K562 (cell line): ENCODE measurements at regions of chr1 and their contacts with region 1.

Region 1: DNA sequence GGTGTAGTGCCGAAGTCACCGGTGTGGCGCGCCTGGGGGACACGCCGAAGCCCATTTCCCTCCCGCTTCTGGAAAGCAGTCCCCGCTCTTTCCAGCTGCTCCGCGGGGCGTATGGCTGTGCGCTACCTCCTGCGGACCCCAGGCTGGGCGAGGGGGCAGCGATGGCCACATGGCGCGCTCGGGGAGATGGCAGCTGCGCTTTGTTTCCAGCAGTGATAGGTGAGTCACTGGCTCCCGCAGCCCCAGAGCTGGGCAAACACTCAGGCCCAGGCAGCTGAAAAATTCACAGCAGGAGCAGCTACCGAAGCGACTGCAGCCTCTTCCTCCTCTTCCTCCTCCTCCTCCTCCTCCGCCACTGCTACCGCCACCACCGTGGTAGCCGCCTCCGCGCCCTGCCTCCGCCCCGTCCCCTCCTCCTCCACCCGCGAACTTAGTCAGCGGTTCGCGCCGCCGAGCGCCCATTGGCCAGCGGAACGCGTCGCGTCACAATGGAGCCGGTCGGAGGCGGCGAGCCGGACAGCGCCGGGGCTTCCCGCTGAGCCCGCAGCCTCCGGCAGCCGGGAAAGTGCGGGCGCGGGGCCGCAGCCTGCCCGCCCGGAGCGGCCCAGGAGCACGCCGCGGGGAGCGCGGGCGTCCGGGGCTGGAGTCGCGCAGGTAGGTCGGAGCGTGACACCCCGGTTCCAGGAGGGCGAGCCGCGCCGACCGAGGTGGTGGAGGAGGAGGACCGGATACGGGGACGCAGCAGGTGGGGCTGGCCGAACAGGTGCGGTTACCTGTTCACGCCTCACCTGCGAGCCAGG is at the start of gene LRRC8B:
- DNase-seq: peak; percentile 90 to 94 (median 92)
- ATAC-seq: peak; percentile 94
- H3K4me3 ChIP-seq: peak within 1 kb of the TSS; percentile 94
- H3K27ac ChIP-seq: peak within 1 kb of the TSS; percentile 98
- H3K4me1 ChIP-seq: peaks cover 17 to 32% of the 10 kb centered on the region in 2 experiments
- H3K27me3 ChIP-seq: no peaks in the 10 kb centered on the region
- CTCF ChIP-seq: no peak
- EP300 ChIP-seq: no peak
- POLR2A ChIP-seq: peak; percentile 94
- RAD21 ChIP-seq: no peak
- polyA plus RNA-seq, gene LRRC8B: 4.3 to 5.7 TPM

Region 2: DNA sequence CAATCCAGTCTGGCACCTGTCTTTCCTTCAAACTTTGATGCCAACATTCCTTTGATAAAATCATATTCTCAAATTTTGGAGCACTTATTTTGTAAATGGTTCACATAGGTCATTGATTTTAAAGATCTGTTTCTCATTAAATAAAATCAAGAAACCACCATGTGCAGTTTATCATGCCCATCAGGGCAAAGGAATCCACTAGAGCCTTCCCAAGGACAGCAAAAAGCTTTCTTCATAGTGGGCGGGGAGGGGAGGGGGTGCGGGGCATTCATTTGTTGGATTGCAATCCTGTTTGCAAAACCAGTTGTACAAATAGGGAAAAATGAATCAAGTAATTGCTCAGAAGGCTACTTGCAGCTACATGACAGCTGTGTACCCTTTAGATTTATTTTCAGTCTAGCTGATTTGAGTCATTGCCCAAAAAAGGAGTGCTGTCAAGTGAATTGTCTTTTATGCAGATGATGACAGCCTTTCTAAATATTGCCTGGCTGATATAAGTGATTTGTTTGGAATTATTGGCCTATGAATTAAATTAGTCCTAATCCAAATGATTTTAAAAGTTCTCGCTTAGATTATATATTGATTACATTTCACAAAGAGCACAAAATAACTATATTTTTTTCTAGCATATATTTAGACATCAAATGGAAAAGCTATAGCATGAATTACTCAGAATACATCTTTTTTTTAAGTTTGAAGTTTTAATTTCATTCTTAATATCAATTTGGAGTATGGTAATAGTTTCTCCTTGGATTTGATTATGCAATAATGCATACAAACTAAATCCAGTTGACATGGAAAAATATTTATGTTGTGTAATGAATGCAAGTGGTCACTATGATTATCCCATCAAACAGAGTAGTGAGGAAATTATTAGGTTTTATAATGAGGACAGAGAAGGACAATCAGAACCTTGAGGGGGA is 23.3 kb after region 1 on chr1:
- CTCF ChIA-PET with region 1: no interaction called
- POLR2A ChIA-PET with region 1: no interaction called
- in situ Hi-C with region 1: no loop called
- intact Hi-C with region 1: loop called (anchors 1 kb)
- DNase-seq: peak in 1 of 4 experiments; percentile 56
- ATAC-seq: peak; percentile 3; the same call in 1 of the 3 replicates
- H3K4me3 ChIP-seq: no peak overlapping the region
- H3K27ac ChIP-seq: peak overlapping the region; percentile 95
- H3K4me1 ChIP-seq: peaks cover 21 to 74% of the 10 kb centered on the region in 2 experiments
- H3K27me3 ChIP-seq: no peaks in the 10 kb centered on the region
- CTCF ChIP-seq: no peak
- EP300 ChIP-seq: no peak
- POLR2A ChIP-seq: no peak
- RAD21 ChIP-seq: no peak

Region 3: GRCh38 chr1:89598450-89599331 is 74.1 kb after region 1 on chr1:
- CTCF ChIA-PET with region 1: interaction called, 5 read pairs
- POLR2A ChIA-PET with region 1: interaction called, 4 read pairs
- in situ Hi-C with region 1: loop called (anchors 5 kb)
- intact Hi-C with region 1: loop called (anchors 1 kb)
- DNase-seq: peak; percentile 49 to 56 (median 51)
- ATAC-seq: peak; percentile 89
- H3K4me3 ChIP-seq: no peak overlapping the region
- H3K27ac ChIP-seq: no peak overlapping the region
- H3K4me1 ChIP-seq: no peaks in the 10 kb centered on the region
- H3K27me3 ChIP-seq: no peaks in the 10 kb centered on the region
- CTCF ChIP-seq: peak; percentile 60 to 76 (median 69); a peak in 5 of 6 replicates
- EP300 ChIP-seq: no peak
- POLR2A ChIP-seq: peak; percentile 22
- RAD21 ChIP-seq: peak; percentile 70 to 83

Region 4: GRCh38 chr1:89762779-89763648 is 238.4 kb after region 1 on chr1:
- CTCF ChIA-PET with region 1: no interaction called
- POLR2A ChIA-PET with region 1: no interaction called
- in situ Hi-C with region 1: no loop called
- intact Hi-C with region 1: loop called (anchors 2 kb)
- DNase-seq: peak; percentile 88 to 92 (median 90)
- ATAC-seq: peak; percentile 100
- H3K4me3 ChIP-seq: peak overlapping the region; percentile 36
- H3K27ac ChIP-seq: peak overlapping the region; percentile 35; the same call in 1 of the 3 replicates
- H3K4me1 ChIP-seq: peaks cover 15 to 17% of the 10 kb centered on the region in 2 experiments
- H3K27me3 ChIP-seq: no peaks in the 10 kb centered on the region; a peak in 1 of 5 replicates
- CTCF ChIP-seq: peak; percentile 96 to 98 (median 97)
- EP300 ChIP-seq: peak; percentile 46; the same call in 1 of the 2 replicates
- POLR2A ChIP-seq: no peak
- RAD21 ChIP-seq: peak; percentile 98 to 99

Region 5: DNA sequence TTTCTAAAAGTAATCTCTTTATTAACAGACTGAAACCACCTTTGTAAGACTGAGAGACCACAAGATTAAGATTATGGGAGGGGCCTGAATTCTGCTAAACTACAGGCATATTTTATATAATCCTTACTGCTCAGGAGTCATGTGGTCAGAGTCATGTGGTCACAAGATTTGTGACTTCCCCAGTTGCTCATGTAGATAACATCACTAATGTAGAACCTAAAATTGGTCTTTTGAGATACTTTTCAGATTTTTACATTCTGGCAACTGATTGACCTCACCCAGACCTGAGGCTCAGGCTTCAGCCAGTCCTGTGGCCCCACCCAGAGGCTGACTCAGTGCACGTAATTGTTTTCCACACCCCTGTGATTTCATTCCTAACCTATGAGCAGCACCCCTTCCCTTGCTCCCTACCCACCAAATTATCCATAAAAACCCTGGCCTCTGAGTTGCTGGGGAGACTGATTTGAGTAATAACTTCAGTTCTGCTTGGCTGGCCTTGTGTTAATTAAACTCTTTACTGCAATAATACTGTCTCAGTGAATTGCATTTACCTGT is 428.6 kb after region 1 on chr1:
- CTCF ChIA-PET with region 1: no interaction called
- POLR2A ChIA-PET with region 1: no interaction called
- in situ Hi-C with region 1: no loop called
- intact Hi-C with region 1: loop called (anchors 2 kb)
- DNase-seq: peak; percentile 37 to 84 (median 62)
- ATAC-seq: peak; percentile 97
- H3K4me3 ChIP-seq: no peak overlapping the region
- H3K27ac ChIP-seq: no peak overlapping the region; the same call in 2 of the 3 replicates
- H3K4me1 ChIP-seq: peaks cover 8 to 56% of the 10 kb centered on the region in 2 experiments; a peak in 4 of 5 replicates
- H3K27me3 ChIP-seq: no peaks in the 10 kb centered on the region
- CTCF ChIP-seq: peak; percentile 79 to 83 (median 80)
- EP300 ChIP-seq: peak; percentile 25; the same call in 1 of the 2 replicates
- POLR2A ChIP-seq: no peak
- RAD21 ChIP-seq: peak; percentile 92 to 94

Region 6: DNA sequence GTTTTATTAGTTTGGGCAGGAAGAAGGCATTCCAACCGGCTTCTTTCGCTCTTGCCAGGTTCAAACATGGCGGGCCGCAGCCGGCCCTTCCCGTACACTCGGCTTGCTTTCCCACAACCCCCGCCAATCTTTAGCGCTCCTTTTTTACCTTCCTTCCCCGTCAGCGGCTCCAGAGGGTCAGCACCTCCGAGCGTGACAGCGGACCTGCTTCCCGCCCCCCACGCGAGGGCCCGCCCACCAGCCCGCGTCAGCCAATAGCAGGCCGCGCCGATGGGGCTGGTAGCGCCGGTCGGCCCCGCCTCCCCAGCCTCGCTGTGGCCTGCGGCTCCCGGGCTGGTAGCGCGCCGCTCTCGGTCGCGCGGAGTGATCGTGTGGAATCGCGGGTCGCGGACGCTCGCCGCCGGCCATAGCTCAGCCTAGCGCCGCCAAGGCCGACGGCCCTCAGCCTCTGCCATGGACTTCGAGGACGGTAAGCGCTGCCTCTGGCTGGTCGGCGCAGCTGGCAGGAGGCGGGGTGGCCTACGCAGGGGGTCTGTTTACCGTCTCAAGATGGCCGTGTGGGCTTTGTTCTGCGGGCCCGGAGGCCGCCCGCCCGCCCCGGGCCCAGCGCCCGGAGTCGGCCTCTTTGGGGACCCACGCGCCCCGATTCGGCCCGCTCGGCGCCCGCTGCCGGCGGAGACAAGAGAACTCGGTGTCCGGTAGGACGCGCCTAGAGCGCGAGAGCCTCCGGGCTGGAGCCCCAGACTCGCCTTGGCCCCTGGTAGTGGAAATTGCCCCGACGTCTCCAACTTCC is 470.4 kb after region 1 on chr1 and contains the start of gene ZNF326:
- CTCF ChIA-PET with region 1: no interaction called
- POLR2A ChIA-PET with region 1: no interaction called
- in situ Hi-C with region 1: no loop called
- intact Hi-C with region 1: loop called (anchors 10 kb)
- DNase-seq: peak; percentile 97 to 99 (median 99)
- ATAC-seq: peak; percentile 97
- H3K4me3 ChIP-seq: peak within 1 kb of the TSS; percentile 83
- H3K27ac ChIP-seq: peak within 1 kb of the TSS; percentile 94
- H3K4me1 ChIP-seq: peaks cover 21 to 30% of the 10 kb centered on the region in 2 experiments
- H3K27me3 ChIP-seq: no peaks in the 10 kb centered on the region
- CTCF ChIP-seq: peak in 2 of 3 experiments; percentile 2 to 7; a peak in 1 of 6 replicates
- EP300 ChIP-seq: no peak
- POLR2A ChIP-seq: peak; percentile 97
- RAD21 ChIP-seq: no peak
- polyA plus RNA-seq, gene ZNF326: 7.3 to 7.7 TPM